ENCODE measurements at regions of chr3 and their contacts with region 1.

Region 1: DNA sequence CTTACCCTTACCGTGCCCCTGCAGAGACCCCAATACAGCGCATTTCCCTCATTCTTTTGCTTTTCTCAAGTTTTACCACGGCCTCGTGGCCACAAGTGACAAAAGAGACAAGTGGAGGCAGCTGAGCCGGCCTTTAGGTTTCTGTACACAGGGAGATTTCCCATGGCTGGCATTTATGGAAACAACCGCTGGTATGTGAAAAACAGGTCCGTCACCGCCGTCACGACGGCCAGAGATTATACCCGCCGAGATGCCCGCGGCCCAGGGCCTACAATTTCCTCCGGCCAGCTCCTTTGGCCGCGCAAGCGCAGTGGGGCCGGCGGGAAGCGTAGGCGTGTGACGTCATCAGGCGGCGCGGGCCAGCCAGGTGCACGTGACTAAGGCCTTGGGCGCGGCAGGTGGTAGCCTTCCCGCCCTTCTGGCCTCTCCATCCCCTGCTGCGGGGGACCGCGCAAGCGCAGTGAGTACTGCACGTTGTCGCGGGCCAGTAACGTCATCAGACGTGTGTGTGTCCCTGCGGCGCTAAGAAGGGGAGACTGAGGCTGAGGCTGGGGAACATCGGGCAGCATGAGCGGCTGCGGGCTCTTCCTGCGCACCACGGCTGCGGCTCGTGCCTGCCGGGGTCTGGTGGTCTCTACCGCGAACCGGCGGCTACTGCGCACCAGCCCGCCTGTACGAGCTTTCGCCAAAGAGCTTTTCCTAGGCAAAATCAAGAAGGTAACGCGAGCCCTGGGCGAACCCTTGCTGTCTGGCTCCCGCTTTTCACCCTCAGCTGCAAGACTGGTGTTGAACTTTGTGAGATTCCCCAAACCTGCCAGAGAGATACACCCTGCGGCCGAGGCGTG is at the start of gene ACAD9:
- DNase-seq: peak; percentile 98
- ATAC-seq: peak; percentile 98
- total RNA-seq, gene ACAD9: 42.0 TPM

Region 2: DNA sequence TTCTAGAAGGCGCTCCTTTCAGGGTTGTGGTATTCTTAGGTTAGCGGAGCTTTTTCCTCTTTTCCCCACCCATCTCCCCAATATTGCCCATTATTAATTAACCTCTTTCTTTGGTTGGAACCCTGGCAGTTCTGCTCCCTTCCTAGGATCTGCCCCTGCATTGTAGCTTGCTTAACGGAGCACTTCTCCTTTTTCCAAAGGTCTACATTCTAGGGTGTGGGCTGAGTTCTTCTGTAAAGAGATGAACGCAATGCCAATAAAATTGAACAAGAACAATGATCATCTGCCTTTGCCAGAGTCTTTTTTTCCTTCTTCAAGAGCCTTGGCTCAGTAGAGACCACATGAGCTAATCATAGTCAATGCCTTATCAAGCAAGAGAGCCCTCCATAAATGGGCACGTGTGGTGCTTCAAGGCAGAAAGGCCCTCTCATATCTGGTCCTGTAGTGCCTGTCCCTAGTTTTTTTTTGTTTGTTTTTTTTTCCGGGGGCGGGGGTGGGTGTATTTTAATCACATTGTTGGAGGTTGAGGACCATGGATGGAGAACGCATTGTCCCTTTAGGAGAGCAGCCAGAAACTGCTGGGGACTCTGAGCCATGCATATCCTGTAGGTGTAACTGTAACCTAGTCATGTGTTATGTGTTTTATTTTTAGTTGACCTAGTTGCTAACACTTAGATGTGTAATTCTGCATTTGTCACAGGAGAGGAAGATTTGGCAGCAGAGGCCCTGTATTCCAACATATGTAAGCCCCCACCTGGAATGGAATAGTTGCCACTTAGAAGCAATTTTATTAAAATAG is 64.6 kb before region 1 on chr3:
- intact Hi-C with region 1: no loop called
- DNase-seq: no peak
- ATAC-seq: peak; percentile 92

Region 3: DNA sequence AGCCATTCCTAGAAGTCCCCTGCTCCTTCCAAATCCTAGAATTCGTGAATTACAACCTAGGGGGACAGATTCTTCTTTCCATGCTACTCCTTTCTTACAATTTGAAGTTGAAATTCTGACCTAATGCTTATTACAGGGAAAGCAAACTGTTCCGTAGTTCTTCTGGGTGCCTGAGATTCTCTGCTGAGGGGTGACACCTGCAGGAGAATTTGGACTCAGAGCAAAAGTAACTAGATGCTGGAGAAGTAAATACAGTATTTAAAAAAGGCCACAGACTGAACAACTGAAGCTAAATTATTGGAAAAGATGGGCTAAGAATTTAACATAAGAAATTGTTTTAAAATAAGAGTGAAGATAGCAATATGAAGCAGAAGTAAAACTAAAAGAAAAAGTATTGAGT is 37.9 kb after region 1 on chr3:
- intact Hi-C with region 1: loop called (anchors 5 kb)
- DNase-seq: no peak
- ATAC-seq: no peak